Body of pancreas (tissue), 4 donors: ENCODE measurements at regions of chr1 and their contacts with region 1.

Region 1: DNA sequence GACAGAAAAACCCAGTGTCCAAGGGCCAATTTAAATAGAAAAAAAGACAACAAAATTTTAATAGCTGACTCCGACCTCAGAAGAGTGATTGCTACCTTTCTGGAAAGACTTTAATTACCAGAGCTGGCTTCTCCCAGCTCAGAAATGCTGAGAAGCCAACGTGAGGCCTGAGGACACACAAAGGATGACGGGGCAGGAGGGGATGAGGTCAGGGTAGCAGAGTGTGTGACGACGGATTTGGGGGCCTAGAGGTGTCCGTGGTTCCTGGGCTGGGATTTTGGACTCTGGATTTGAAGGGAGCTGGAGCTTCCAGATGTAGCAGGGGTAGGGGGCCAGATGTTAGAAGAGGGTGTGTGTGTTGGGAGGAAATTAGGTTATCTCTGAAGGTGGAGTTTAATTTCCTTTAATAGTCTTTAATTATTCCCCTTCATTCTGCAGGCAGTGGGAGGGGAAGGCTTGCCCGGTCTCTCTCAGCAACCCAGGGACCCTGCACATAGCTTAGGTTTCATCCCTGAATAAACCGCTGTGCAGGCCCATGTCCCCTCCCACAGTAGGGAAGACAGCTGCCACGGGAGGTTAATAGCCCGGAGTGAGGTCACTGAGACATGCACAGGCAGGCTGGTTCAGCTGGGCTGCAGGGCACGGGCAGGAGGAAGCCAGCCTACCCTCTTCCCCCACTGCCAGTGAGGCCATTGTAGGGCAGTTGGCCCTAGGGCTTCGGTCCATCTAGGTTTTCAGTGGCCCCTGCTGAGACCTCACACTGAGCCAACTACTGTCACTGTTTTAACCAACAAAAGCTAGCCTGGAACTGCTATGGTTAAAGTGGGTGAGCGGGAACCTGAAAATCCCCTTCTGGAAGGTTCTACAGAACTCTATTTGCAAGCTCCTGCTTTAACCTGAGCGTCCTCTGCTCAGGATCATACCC is 3.8 kb upstream of the PADI3 start:
- DNase-seq: no peak
- ATAC-seq: no peak
- H3K4me3 ChIP-seq: no peak overlapping the region
- H3K27ac ChIP-seq: no peak overlapping the region
- H3K4me1 ChIP-seq: no peaks in the 10 kb centered on the region
- H3K27me3 ChIP-seq: no peaks in the 10 kb centered on the region
- CTCF ChIP-seq: no peak
- POLR2A ChIP-seq: no peak

Region 2: GRCh38 chr1:17134034-17134433 is 111.0 kb before region 1 on chr1:
- intact Hi-C with region 1: loop called (anchors 5 kb)
- DNase-seq: no peak
- ATAC-seq: no peak
- H3K4me3 ChIP-seq: no peak overlapping the region
- H3K27ac ChIP-seq: no peak overlapping the region
- H3K4me1 ChIP-seq: no peaks in the 10 kb centered on the region
- H3K27me3 ChIP-seq: no peaks in the 10 kb centered on the region
- CTCF ChIP-seq: no peak
- POLR2A ChIP-seq: no peak

Region 3: DNA sequence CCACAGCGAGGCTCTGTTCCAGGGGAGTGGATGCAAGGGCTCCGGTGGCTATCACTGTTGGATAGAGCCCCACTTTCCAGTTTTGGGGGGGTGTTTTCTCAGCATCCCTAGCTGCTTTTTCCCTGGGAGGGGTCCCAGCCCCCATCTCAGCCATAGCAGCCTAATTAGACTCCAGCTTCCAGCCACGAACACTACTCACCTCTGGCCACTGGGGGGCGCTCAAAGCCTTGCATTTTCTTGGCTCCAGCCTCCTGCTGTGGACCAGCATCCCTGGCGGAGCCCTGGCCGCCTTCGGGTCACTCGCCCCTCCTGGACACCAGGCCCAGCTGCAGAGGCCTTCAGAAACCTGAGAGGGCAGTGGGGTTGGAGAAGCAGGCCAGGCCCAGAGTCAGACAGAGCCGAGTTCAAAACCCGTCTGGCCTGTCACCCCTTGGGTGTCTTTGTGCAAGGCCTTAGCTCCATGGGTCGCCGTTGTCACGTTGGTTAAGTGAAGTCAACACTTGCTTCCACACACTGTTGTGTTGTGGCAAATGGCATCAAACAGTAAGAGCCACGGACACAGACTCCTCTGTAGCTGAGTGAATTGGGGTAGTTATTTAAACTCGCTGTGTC is 416.6 kb after region 1 on chr1:
- intact Hi-C with region 1: no loop called
- DNase-seq: peak; percentile 60 to 66 (median 64)
- ATAC-seq: peak; percentile 51
- H3K4me3 ChIP-seq: no peak overlapping the region
- H3K27ac ChIP-seq: no peak overlapping the region
- H3K4me1 ChIP-seq: peaks cover 11% of the 10 kb centered on the region
- H3K27me3 ChIP-seq: no peaks in the 10 kb centered on the region
- CTCF ChIP-seq: peak; percentile 45 to 69 (median 68)
- POLR2A ChIP-seq: no peak